Caco-2 (cell line): ENCODE measurements at regions of chr10 and their contacts with region 1.

Region 1: GRCh38 chr10:44913350-44914081 is 2.4 kb downstream of the TMEM72 start:
- DNase-seq: no peak
- H3K4me3 ChIP-seq: no peak overlapping the region
- H3K4me3 Mint-ChIP-seq: no peak overlapping the region
- H3K27ac Mint-ChIP-seq: no peak overlapping the region
- H3K4me1 ChIP-seq: peaks cover 21% of the 10 kb centered on the region
- H3K4me1 Mint-ChIP-seq: no peaks in the 10 kb centered on the region
- H3K27me3 ChIP-seq: no peaks in the 10 kb centered on the region
- H3K27me3 Mint-ChIP-seq: peaks cover 3% of the 10 kb centered on the region
- CTCF ChIP-seq: no peak

Region 2: DNA sequence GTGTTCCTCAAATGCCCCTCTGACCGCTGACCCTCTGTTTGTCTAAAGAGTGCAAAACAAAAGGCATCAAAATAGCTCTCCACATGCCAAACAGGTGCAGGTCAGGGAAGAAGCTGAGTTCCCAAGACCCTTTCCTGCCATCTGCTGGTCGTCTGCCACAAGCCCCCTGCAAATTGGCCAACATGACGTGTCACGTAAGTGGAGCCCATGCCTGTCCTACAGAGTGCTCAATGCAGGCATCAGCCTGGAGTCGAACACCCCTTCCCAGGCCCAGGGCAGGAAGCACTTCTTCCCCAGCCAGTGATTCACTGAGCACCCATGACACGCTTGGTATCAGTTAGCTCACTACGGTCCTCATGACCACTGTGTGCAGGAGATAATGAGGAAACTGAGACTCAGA is 11.7 kb after region 1 on chr10:
- CTCF ChIA-PET with region 1: interaction called, 12 read pairs
- POLR2A ChIA-PET with region 1: no interaction called
- intact Hi-C with region 1: loop called (anchors 1 kb)
- DNase-seq: peak; percentile 73 to 78
- H3K4me3 ChIP-seq: no peak overlapping the region
- H3K4me3 Mint-ChIP-seq: no peak overlapping the region
- H3K27ac Mint-ChIP-seq: no peak overlapping the region
- H3K4me1 ChIP-seq: peaks cover 10% of the 10 kb centered on the region; the same call in 1 of the 2 replicates
- H3K4me1 Mint-ChIP-seq: no peaks in the 10 kb centered on the region
- H3K27me3 ChIP-seq: no peaks in the 10 kb centered on the region
- H3K27me3 Mint-ChIP-seq: peaks cover 13% of the 10 kb centered on the region
- CTCF ChIP-seq: peak; percentile 69 to 89

Region 3: GRCh38 chr10:45594276-45595106 is 681.0 kb after region 1 on chr10:
- CTCF ChIA-PET with region 1: no interaction called
- POLR2A ChIA-PET with region 1: no interaction called
- intact Hi-C with region 1: loop called (anchors 5 kb)
- DNase-seq: peak; percentile 95 to 97
- H3K4me3 ChIP-seq: peak overlapping the region; percentile 89
- H3K4me3 Mint-ChIP-seq: peak overlapping the region; percentile 73
- H3K27ac Mint-ChIP-seq: peak overlapping the region; percentile 54
- H3K4me1 ChIP-seq: no peaks in the 10 kb centered on the region
- H3K4me1 Mint-ChIP-seq: peaks cover 14% of the 10 kb centered on the region
- H3K27me3 ChIP-seq: 0 out of 2 replicates have a peak, but pooled peaks cover 1% of the 10 kb centered on the region
- H3K27me3 Mint-ChIP-seq: peaks cover 5% of the 10 kb centered on the region
- CTCF ChIP-seq: no peak